HCT116 (cell line): ENCODE measurements at regions of chr11 and their contacts with region 1.

Region 1: DNA sequence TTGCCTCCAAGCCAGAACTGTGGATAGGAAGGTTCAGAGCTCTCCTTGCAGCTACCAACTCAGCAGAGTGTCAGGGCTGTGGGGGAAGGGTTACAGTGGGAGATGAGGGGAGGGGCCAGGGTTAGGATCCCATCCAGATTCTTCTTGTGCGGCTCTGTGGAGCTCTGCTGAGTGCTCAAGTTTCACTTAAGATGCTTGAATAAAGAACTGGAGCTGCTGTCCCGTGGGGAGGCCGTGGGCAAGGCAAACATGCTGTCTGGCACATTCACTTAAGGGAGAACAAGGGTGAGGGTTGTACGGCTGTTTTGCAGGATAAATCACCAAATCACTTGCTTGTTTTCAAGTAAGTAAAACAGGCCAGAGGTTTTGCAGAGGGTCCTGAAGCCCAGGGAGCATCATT is 197.1 kb downstream of the FAM76B start:
- DNase-seq: no peak
- ATAC-seq: no peak
- H3K4me3 ChIP-seq: no peak overlapping the region
- H3K27ac ChIP-seq: no peak overlapping the region
- H3K4me1 ChIP-seq: no peaks in the 10 kb centered on the region
- H3K27me3 ChIP-seq: no peaks in the 10 kb centered on the region
- CTCF ChIP-seq: no peak
- POLR2A ChIP-seq: no peak
- RAD21 ChIP-seq: no peak

Region 2: GRCh38 chr11:95531116-95531515 is 61.4 kb before region 1 on chr11:
- CTCF ChIA-PET with region 1: no interaction called
- POLR2A ChIA-PET with region 1: no interaction called
- RAD21 ChIA-PET with region 1: no interaction called
- intact Hi-C with region 1: loop called (anchors 10 kb)
- DNase-seq: no peak
- ATAC-seq: no peak
- H3K4me3 ChIP-seq: no peak overlapping the region
- H3K27ac ChIP-seq: no peak overlapping the region
- H3K4me1 ChIP-seq: no peaks in the 10 kb centered on the region
- H3K27me3 ChIP-seq: no peaks in the 10 kb centered on the region; the same call in 1 of the 2 replicates
- CTCF ChIP-seq: no peak
- POLR2A ChIP-seq: no peak
- RAD21 ChIP-seq: no peak

Region 3: GRCh38 chr11:95616256-95616804 is 23.9 kb after region 1 on chr11:
- CTCF ChIA-PET with region 1: no interaction called
- POLR2A ChIA-PET with region 1: no interaction called
- RAD21 ChIA-PET with region 1: no interaction called
- intact Hi-C with region 1: loop called (anchors 1 kb)
- DNase-seq: no peak
- ATAC-seq: no peak
- H3K4me3 ChIP-seq: no peak overlapping the region
- H3K27ac ChIP-seq: no peak overlapping the region
- H3K4me1 ChIP-seq: no peaks in the 10 kb centered on the region
- H3K27me3 ChIP-seq: 0 out of 2 replicates have a peak, but pooled peaks cover 4% of the 10 kb centered on the region
- CTCF ChIP-seq: no peak
- POLR2A ChIP-seq: no peak
- RAD21 ChIP-seq: no peak